ENCODE measurements at regions of chr2 and their contacts with region 1.

Region 1: GRCh38 chr2:197310271-197310985 is at the start of gene ANKRD44:
- DNase-seq: peak; percentile 91
- H3K4me3 Mint-ChIP-seq: peak within 1 kb of the TSS; percentile 95
- H3K27ac Mint-ChIP-seq: peak within 1 kb of the TSS; percentile 99
- H3K4me1 Mint-ChIP-seq: peaks cover 67% of the 10 kb centered on the region
- H3K27me3 Mint-ChIP-seq: no peaks in the 10 kb centered on the region
- total RNA-seq, gene ANKRD44: 123 to 125 TPM

Region 2: DNA sequence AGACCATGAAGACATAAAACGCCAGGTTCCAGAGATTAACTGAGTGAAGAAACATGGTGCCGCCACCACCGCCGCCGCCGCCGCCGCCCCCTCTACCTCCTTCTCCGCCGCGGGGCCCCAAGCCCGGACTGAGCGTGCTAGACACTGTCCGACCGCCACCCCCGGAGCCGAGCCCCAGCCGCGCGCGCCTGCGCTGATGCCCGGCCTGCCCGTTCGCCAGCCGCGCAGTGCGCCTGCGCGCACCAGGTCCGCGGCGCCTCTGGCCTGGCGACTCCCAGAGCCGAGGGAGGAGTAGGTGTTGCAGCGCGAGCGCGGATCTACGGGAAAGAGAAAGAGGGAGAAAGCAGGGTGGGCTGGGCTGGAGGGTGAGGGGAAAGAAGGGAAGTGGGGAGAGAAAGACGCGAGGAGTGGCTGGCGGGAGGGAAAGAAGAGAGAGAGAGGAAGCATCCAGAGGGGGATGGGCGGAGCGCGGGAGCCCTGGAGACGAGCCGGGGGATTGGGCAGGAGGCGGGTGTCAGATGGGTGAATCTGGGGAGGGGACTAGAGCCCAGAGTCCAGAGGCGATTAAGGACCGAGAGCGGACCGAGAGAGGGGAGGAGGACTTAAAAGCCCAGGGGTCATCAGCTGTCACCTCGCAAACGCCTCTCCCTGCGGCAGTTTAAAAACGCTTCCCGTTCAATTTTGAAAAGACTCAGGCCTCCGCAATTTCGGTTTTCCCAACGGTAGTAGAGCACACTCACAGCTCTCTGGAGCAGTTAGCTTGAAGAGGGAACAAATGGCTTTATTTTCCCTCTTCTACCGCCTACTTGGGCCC is 383.7 kb before region 1 on chr2 and contains the start of gene PGAP1:
- CTCF ChIA-PET with region 1: no interaction called
- POLR2A ChIA-PET with region 1: interaction called, 3 read pairs
- intact Hi-C with region 1: loop called (anchors 5 kb)
- DNase-seq: peak; percentile 93
- H3K4me3 Mint-ChIP-seq: peak within 1 kb of the TSS; percentile 96
- H3K27ac Mint-ChIP-seq: peak within 1 kb of the TSS; percentile 100
- H3K4me1 Mint-ChIP-seq: peaks cover 35% of the 10 kb centered on the region
- H3K27me3 Mint-ChIP-seq: peaks cover 4% of the 10 kb centered on the region
- total RNA-seq, gene PGAP1: 24.5 to 25.5 TPM

Region 3: GRCh38 chr2:197191177-197191939 is 119.1 kb before region 1 on chr2:
- CTCF ChIA-PET with region 1: interaction called, 73 read pairs
- POLR2A ChIA-PET with region 1: interaction called, 13 read pairs
- intact Hi-C with region 1: loop called (anchors 1 kb)
- DNase-seq: no peak
- H3K4me3 Mint-ChIP-seq: no peak overlapping the region
- H3K27ac Mint-ChIP-seq: peak overlapping the region; percentile 62
- H3K4me1 Mint-ChIP-seq: peaks cover 71% of the 10 kb centered on the region
- H3K27me3 Mint-ChIP-seq: no peaks in the 10 kb centered on the region

Region 4: GRCh38 chr2:197239434-197239833 is 71.0 kb before region 1 on chr2:
- CTCF ChIA-PET with region 1: interaction called, 4 read pairs
- POLR2A ChIA-PET with region 1: interaction called, 15 read pairs
- intact Hi-C with region 1: loop called (anchors 1 kb)
- DNase-seq: no peak
- H3K4me3 Mint-ChIP-seq: peak overlapping the region; percentile 78
- H3K27ac Mint-ChIP-seq: peak overlapping the region; percentile 92
- H3K4me1 Mint-ChIP-seq: peaks cover 83% of the 10 kb centered on the region
- H3K27me3 Mint-ChIP-seq: no peaks in the 10 kb centered on the region

Region 5: DNA sequence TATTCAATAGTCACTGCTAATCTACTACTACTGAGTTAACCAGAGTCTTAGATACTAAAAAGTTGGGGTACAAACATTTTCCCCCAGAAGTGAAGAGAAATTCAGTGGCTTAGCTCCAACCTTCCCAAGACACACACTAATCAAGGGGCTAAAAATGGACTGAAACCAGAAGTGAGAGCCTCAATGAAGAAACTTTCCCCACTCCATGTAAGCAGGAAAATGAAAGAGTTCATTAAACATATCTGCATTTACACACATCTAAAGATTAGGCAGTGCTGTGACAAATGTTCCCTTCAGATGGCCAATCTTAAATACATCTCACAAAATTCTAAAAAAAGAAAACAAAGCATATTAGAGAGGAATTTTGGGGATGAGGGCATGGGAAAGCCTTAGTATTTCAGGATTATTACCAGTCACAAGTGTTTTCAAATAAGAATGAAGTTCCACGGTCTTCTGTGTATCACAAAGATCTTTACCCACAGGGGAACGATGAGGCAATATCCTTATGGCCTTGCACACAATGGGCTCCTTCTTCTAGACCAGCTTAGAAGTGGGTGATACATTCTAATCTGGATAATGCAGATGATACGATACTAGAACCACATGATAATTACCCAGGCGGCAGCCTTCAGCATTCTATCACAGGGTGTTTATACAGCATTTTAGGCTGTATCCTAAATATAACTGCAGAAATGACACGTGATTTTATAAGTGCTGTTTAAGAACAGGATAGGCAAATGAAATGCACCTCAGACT is 17.0 kb before region 1 on chr2:
- CTCF ChIA-PET with region 1: interaction called, 10 read pairs
- POLR2A ChIA-PET with region 1: interaction called, 101 read pairs
- intact Hi-C with region 1: loop called (anchors 1 kb)
- DNase-seq: peak; percentile 41
- H3K4me3 Mint-ChIP-seq: peak overlapping the region; percentile 74
- H3K27ac Mint-ChIP-seq: peak overlapping the region; percentile 100
- H3K4me1 Mint-ChIP-seq: peaks cover 89% of the 10 kb centered on the region
- H3K27me3 Mint-ChIP-seq: no peaks in the 10 kb centered on the region

Region 6: GRCh38 chr2:197434541-197435513 is 124.4 kb after region 1 on chr2 and contains the start of gene SF3B1:
- CTCF ChIA-PET with region 1: no interaction called
- POLR2A ChIA-PET with region 1: interaction called, 3 read pairs
- intact Hi-C with region 1: loop called (anchors 5 kb)
- DNase-seq: peak; percentile 100
- H3K4me3 Mint-ChIP-seq: peak within 1 kb of the TSS; percentile 97
- H3K27ac Mint-ChIP-seq: peak within 1 kb of the TSS; percentile 100
- H3K4me1 Mint-ChIP-seq: peaks cover 45% of the 10 kb centered on the region
- H3K27me3 Mint-ChIP-seq: peaks cover 1% of the 10 kb centered on the region
- total RNA-seq, gene SF3B1: 228 to 245 TPM

Region 7: DNA sequence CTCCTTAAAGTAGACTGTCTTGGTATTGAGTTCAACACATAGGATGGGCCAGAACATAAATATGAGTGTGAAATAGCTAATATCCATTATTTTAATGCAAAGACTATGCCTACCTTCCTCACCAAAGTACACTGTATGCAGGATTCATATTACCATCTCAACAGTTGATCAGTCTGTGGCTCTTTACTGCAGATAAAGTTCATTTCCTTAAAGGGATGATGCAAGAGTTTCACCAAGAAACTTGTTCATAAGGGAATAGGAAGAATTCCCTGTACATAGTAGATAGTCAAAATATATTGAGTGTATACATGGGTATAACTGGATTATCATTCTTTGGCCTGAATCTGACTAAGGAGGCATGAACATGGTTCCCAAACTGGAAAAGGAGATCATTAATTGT is 429.8 kb after region 1 on chr2:
- CTCF ChIA-PET with region 1: no interaction called
- POLR2A ChIA-PET with region 1: no interaction called
- intact Hi-C with region 1: no loop called
- DNase-seq: no peak
- H3K4me3 Mint-ChIP-seq: no peak overlapping the region
- H3K27ac Mint-ChIP-seq: no peak overlapping the region
- H3K4me1 Mint-ChIP-seq: no peaks in the 10 kb centered on the region
- H3K27me3 Mint-ChIP-seq: no peaks in the 10 kb centered on the region